ENCODE measurements at regions of chr12 and their contacts with region 1.

Region 1: DNA sequence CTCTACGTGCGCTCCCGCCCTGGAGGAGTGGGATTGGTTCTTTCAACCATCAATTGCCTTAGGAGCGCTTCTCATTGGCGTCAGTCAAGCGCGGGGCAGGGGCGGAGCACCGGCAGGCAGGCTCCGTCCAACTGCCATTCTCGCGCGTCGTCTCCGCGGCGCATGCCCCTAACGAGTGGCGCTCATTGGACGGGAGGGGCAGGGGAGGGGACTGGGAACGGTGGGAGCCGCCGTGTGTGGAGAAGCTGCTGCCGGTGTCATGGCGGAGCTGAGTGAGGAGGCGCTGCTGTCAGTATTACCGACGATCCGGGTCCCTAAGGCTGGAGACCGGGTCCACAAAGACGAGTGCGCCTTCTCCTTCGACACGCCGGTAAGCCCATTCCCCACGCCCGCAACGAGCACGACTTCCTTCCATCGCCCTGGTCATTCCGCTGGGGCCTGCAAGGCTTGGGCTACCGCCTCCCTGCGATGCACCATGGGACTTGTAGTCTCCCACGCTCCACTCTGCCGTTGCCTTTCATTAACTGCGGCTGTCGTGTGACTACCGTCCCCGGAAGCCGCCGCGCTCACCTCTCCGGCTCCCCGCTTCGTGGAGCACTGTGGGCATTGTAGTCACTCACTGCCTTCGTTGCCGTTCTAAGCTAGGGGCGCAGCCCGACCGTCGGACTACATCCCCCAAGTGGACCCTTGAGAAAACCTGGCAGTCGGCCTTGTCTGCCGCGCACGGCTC is at the start of gene USP5:
- DNase-seq: peak; percentile 87 to 100 (median 99)
- ATAC-seq: peak; percentile 87
- H3K4me3 ChIP-seq: peak within 1 kb of the TSS; percentile 87
- H3K4me3 Mint-ChIP-seq: peak within 1 kb of the TSS; percentile 89 to 100 (median 94)
- H3K27ac ChIP-seq: peak within 1 kb of the TSS; percentile 85
- H3K27ac Mint-ChIP-seq: peak within 1 kb of the TSS; percentile 89 to 99 (median 97)
- H3K4me1 ChIP-seq: peaks cover 16 to 18% of the 10 kb centered on the region in 2 donors
- H3K4me1 Mint-ChIP-seq: peaks cover 12 to 38% (median 28%) of the 10 kb centered on the region in 7 donors
- H3K27me3 ChIP-seq: no peaks in the 10 kb centered on the region
- H3K27me3 Mint-ChIP-seq: no peaks in the 10 kb centered on the region
- total RNA-seq, gene USP5: 58.0 to 134 (median 71.1) TPM

Region 2: GRCh38 chr12:6470375-6471163 is 381.5 kb before region 1 on chr12 and contains the start of gene VAMP1:
- CTCF ChIA-PET with region 1: no interaction called
- POLR2A ChIA-PET with region 1: no interaction called
- intact Hi-C with region 1: loop called (anchors 1 to 2 kb)
- DNase-seq: peak; percentile 90 to 97 (median 95)
- ATAC-seq: peak; percentile 94
- H3K4me3 ChIP-seq: peak within 1 kb of the TSS; percentile 96
- H3K4me3 Mint-ChIP-seq: peak within 1 kb of the TSS; percentile 85 to 96 (median 92)
- H3K27ac ChIP-seq: peak within 1 kb of the TSS; percentile 75
- H3K27ac Mint-ChIP-seq: peak within 1 kb of the TSS; percentile 79 to 99 (median 95)
- H3K4me1 ChIP-seq: peaks cover 38 to 39% of the 10 kb centered on the region in 2 donors
- H3K4me1 Mint-ChIP-seq: peaks cover 26 to 59% (median 52%) of the 10 kb centered on the region in 7 donors
- H3K27me3 ChIP-seq: no peaks in the 10 kb centered on the region
- H3K27me3 Mint-ChIP-seq: peaks cover 0 to 5% (median 0%) of the 10 kb centered on the region in 5 donors
- total RNA-seq, gene VAMP1: 38.7 to 123 (median 47.9) TPM

Region 3: DNA sequence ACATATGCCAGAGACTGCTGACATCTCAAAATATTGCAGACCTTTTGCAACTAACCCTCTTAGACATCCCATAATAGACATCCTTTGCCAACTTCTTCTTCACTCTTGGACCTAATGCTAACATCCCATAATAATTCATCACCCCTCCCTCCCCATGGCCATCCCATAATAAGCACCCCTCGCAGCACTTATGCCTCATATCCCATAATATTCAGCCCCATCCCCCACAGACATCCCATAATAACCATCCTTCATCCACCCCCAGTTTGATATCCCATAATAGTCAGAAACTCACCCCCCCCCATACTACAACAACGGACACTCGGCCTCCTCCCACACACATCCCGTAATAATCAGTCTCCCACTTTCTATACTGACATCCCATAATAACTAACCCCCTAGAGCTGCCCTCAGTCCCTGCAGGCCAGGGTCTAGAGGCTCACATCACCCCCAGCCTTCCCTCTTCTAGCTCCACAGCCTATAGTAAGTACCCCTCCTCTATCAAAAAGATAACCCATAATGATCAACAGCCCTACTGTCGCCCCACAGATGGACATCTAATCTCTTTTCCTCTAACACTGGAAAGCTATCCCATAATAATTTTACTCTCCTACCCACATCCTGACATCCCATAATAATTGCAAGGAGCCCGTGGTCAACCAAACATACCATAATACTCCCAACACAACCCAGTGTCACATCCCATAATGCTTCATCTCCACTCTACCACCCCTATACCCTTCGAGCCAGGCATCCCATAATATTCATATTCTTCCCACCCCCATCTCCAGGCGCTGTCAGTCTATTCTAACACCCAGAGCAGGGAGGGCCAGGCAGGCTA is 244.1 kb before region 1 on chr12:
- CTCF ChIA-PET with region 1: no interaction called
- POLR2A ChIA-PET with region 1: interaction called, 3 read pairs
- intact Hi-C with region 1: loop called (anchors 1 kb)
- DNase-seq: peak in 8 of 9 donors; percentile 56 to 81 (median 71)
- ATAC-seq: peak; percentile 49
- H3K4me3 ChIP-seq: no peak overlapping the region
- H3K4me3 Mint-ChIP-seq: no peak overlapping the region
- H3K27ac ChIP-seq: peak overlapping the region; percentile 96
- H3K27ac Mint-ChIP-seq: no peak overlapping the region
- H3K4me1 ChIP-seq: peaks cover 46 to 47% of the 10 kb centered on the region in 2 donors
- H3K4me1 Mint-ChIP-seq: peaks cover 48 to 55% (median 51%) of the 10 kb centered on the region in 7 donors
- H3K27me3 ChIP-seq: no peaks in the 10 kb centered on the region
- H3K27me3 Mint-ChIP-seq: no peaks in the 10 kb centered on the region

Region 4: GRCh38 chr12:6752921-6753771 is 98.9 kb before region 1 on chr12 and contains the start of gene MLF2:
- CTCF ChIA-PET with region 1: interaction called, 3 read pairs
- POLR2A ChIA-PET with region 1: interaction called, 15 read pairs
- intact Hi-C with region 1: loop called (anchors 1 kb)
- DNase-seq: peak; percentile 95 to 99 (median 97)
- ATAC-seq: peak; percentile 93
- H3K4me3 ChIP-seq: peak within 1 kb of the TSS; percentile 99
- H3K4me3 Mint-ChIP-seq: peak within 1 kb of the TSS; percentile 91 to 97 (median 96)
- H3K27ac ChIP-seq: peak within 1 kb of the TSS; percentile 97
- H3K27ac Mint-ChIP-seq: peak within 1 kb of the TSS; percentile 97 to 100 (median 99)
- H3K4me1 ChIP-seq: peaks cover 0 to 12% of the 10 kb centered on the region in 2 donors
- H3K4me1 Mint-ChIP-seq: peaks cover 10 to 44% (median 23%) of the 10 kb centered on the region in 7 donors
- H3K27me3 ChIP-seq: no peaks in the 10 kb centered on the region
- H3K27me3 Mint-ChIP-seq: no peaks in the 10 kb centered on the region
- total RNA-seq, gene MLF2: 84.6 to 141 (median 117) TPM

Region 5: DNA sequence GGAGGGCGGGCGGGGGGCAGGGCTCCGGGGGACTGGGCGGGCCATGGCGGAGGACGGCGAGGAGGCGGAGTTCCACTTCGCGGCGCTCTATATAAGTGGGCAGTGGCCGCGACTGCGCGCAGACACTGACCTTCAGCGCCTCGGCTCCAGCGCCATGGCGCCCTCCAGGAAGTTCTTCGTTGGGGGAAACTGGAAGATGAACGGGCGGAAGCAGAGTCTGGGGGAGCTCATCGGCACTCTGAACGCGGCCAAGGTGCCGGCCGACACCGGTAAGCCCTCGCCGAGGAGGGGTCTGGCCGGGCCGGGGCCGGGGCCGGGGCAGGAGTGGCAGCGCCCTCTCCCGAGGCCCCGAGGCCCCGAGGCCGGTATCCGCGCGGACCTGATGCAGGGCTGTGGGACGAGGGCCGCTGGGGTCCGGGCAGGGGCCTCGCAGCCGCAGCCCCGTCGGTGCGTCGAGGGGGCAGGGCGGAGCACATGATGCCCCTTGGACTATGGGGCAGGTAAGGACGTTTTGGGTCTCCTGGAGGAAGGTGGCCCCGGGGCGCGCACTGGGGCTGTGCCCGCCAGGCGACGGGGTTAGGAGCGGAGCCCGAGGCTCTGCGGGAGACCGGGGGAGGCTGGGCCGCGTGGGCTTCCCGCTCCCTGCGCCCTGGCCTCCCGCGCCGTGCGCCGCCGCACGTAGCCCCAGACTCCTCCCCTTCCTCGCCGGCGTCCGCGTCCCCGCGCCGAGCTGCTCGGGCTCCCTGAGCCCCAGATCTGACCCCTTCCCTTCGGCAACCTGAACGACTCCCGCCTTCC is 15.5 kb after region 1 on chr12 and contains the start of gene TPI1:
- CTCF ChIA-PET with region 1: interaction called, 40 read pairs
- POLR2A ChIA-PET with region 1: interaction called, 90 read pairs
- intact Hi-C with region 1: loop called (anchors 1 kb)
- DNase-seq: peak; percentile 40 to 87 (median 52)
- ATAC-seq: peak; percentile 88
- H3K4me3 ChIP-seq: peak within 1 kb of the TSS; percentile 61
- H3K4me3 Mint-ChIP-seq: peak within 1 kb of the TSS; percentile 87 to 93 (median 91)
- H3K27ac ChIP-seq: peak within 1 kb of the TSS; percentile 82
- H3K27ac Mint-ChIP-seq: peak within 1 kb of the TSS; percentile 76 to 95 (median 87)
- H3K4me1 ChIP-seq: peaks cover 38 to 39% of the 10 kb centered on the region in 2 donors
- H3K4me1 Mint-ChIP-seq: peaks cover 34 to 55% (median 44%) of the 10 kb centered on the region in 7 donors
- H3K27me3 ChIP-seq: no peaks in the 10 kb centered on the region
- H3K27me3 Mint-ChIP-seq: no peaks in the 10 kb centered on the region
- total RNA-seq, gene TPI1: 89.7 to 1,293 (median 134) TPM

Region 6: DNA sequence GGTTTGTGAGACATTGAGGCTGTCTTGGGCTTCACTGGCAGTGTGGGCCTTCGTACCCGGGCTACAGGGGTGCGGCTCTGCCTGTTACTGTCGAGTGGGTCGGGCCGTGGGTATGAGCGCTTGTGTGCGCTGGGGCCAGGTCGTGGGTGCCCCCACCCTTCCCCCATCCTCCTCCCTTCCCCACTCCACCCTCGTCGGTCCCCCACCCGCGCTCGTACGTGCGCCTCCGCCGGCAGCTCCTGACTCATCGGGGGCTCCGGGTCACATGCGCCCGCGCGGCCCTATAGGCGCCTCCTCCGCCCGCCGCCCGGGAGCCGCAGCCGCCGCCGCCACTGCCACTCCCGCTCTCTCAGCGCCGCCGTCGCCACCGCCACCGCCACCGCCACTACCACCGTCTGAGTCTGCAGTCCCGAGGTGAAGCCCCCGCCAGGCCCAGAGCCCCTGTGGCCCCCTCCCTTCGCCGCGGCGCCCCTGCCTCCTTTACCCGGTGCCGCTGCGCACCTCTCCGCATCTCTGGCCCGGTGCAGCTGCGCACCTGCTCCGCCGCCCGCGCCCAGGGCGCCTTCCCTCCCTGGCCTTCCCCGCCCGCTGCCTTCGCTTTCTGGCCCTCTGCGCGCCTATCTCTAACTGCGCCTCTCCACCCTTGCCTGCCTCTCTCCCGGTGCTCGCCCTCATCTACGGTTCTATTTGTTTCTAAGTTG is 62.3 kb after region 1 on chr12 and contains the start of gene ENO2:
- CTCF ChIA-PET with region 1: no interaction called
- POLR2A ChIA-PET with region 1: interaction called, 4 read pairs
- intact Hi-C with region 1: loop called in 1 of 2 experiments (anchors 1 kb)
- DNase-seq: peak; percentile 68 to 90 (median 81)
- ATAC-seq: peak; percentile 96
- H3K4me3 ChIP-seq: peak within 1 kb of the TSS; percentile 79
- H3K4me3 Mint-ChIP-seq: peak within 1 kb of the TSS; percentile 88 to 100 (median 96)
- H3K27ac ChIP-seq: peak within 1 kb of the TSS; percentile 86
- H3K27ac Mint-ChIP-seq: peak within 1 kb of the TSS; percentile 86 to 99 (median 93)
- H3K4me1 ChIP-seq: peaks cover 11 to 14% of the 10 kb centered on the region in 2 donors
- H3K4me1 Mint-ChIP-seq: peaks cover 0 to 53% (median 36%) of the 10 kb centered on the region in 7 donors
- H3K27me3 ChIP-seq: no peaks in the 10 kb centered on the region
- H3K27me3 Mint-ChIP-seq: peaks cover 0 to 4% (median 0%) of the 10 kb centered on the region in 5 donors
- total RNA-seq, gene ENO2: 65.3 to 193 (median 178) TPM

Region 7: GRCh38 chr12:7018350-7019042 is 166.4 kb after region 1 on chr12 and contains the start of gene LPCAT3:
- CTCF ChIA-PET with region 1: interaction called, 4 read pairs
- POLR2A ChIA-PET with region 1: no interaction called
- intact Hi-C with region 1: loop called (anchors 1 kb)
- DNase-seq: peak; percentile 93 to 99 (median 98)
- ATAC-seq: peak; percentile 97
- H3K4me3 ChIP-seq: peak within 1 kb of the TSS; percentile 95
- H3K4me3 Mint-ChIP-seq: peak within 1 kb of the TSS; percentile 84 to 100 (median 94)
- H3K27ac ChIP-seq: peak within 1 kb of the TSS; percentile 89
- H3K27ac Mint-ChIP-seq: peak within 1 kb of the TSS; percentile 75 to 96 (median 93)
- H3K4me1 ChIP-seq: peaks cover 11 to 12% of the 10 kb centered on the region in 2 donors
- H3K4me1 Mint-ChIP-seq: peaks cover 25 to 46% (median 41%) of the 10 kb centered on the region in 7 donors
- H3K27me3 ChIP-seq: no peaks in the 10 kb centered on the region
- H3K27me3 Mint-ChIP-seq: no peaks in the 10 kb centered on the region
- total RNA-seq, gene LPCAT3: 16.7 to 37.9 (median 27.1) TPM

Region 8: DNA sequence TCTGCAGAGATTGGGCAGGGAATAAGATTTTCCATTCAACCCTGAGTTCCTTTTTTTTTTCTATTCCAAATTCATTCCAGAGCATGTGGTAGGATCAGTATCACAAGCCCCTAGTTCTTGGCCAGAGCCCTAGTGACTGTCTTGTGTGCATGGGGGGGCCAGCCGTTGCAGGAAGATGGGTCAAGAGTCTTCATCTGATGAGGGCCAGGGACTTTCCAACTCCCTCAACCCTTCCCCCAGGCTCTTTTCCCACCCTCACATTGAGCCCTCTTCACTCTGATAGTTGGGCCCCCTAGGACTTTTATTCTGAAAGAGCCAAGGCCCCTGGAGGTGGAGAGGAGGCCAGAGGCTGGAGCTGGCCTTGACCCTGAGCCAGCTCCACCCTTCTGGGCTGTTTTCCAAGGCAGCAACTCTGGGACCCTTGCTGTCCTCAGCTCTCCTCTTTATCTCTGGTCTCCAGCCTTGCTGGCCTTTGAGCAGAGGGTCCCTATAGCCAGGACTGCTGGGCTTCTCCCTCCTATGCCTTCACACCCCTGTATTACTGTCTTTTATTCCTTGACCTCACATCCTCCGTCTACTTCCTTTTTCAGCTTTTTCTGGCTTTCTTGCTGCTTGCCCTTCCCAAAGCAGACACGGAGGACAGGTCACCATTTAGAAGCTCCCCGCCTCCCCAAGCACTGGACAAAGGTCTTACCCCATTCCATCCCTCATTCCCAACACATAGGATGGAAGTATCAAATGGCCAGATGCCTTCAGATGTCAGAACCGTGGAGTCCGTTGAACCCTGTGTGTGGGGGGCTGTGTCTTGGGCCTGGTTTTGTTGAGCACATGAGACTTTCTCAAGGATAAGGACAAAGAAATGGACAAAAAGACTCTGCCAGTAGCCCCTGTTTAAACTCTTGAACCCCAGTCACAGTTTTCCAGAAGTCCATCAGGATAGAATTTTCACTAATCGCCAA is 271.0 kb after region 1 on chr12:
- CTCF ChIA-PET with region 1: no interaction called
- POLR2A ChIA-PET with region 1: no interaction called
- intact Hi-C with region 1: no loop called
- DNase-seq: no peak
- ATAC-seq: no peak
- H3K4me3 ChIP-seq: no peak overlapping the region
- H3K4me3 Mint-ChIP-seq: no peak overlapping the region
- H3K27ac ChIP-seq: no peak overlapping the region
- H3K27ac Mint-ChIP-seq: no peak overlapping the region
- H3K4me1 ChIP-seq: no peaks in the 10 kb centered on the region
- H3K4me1 Mint-ChIP-seq: peaks cover 0 to 6% (median 4%) of the 10 kb centered on the region in 7 donors
- H3K27me3 ChIP-seq: no peaks in the 10 kb centered on the region
- H3K27me3 Mint-ChIP-seq: no peaks in the 10 kb centered on the region

Measured in naive thymus-derived CD4-positive, alpha-beta T cell (primary cell).